ENCODE measurements at regions of chr7 and their contacts with region 1.

Region 1: GRCh38 chr7:148962823-148963582 is 65.3 kb downstream of the PDIA4 start:
- DNase-seq: peak in 8 of 9 donors; percentile 45 to 80 (median 72)
- ATAC-seq: peak; percentile 61
- H3K4me3 ChIP-seq: peak overlapping the region; percentile 72
- H3K4me3 Mint-ChIP-seq: peak overlapping the region; percentile 78 to 98 (median 93)
- H3K27ac ChIP-seq: peak overlapping the region; percentile 66
- H3K27ac Mint-ChIP-seq: peak overlapping the region; percentile 86 to 95 (median 93)
- H3K4me1 ChIP-seq: peaks cover 0 to 7% of the 10 kb centered on the region in 2 donors
- H3K4me1 Mint-ChIP-seq: peaks cover 11 to 33% (median 25%) of the 10 kb centered on the region in 7 donors
- H3K27me3 ChIP-seq: no peaks in the 10 kb centered on the region
- H3K27me3 Mint-ChIP-seq: peaks cover 0 to 3% (median 0%) of the 10 kb centered on the region in 5 donors

Region 2: DNA sequence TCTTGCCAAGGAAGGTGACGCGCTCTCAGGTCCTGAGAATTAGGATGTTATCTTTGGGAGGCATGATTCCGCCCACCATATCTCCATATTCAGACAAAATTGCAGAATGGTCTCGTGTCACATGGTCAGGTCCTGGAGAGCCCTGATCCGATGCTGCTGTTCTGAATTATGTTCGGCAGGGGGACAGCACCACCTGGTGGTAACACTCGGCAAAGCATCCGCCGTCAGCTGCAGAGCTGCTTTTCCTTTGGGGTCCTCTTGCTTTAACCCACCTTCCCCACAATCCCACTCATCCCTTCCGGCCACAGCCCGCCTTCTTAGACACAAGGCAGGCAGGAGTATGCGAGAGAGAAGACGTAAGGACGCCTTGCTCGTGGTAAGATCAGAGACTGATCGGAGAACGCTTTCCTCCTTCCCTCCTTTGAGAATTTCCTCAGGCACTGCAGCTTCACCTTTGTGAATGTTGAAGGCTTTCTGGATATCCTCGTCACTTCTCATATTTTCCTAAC is 700.2 kb before region 1 on chr7:
- CTCF ChIA-PET with region 1: no interaction called
- POLR2A ChIA-PET with region 1: no interaction called
- intact Hi-C with region 1: loop called (anchors 1 kb)
- DNase-seq: peak; percentile 15 to 63 (median 44)
- ATAC-seq: peak; percentile 85
- H3K4me3 ChIP-seq: no peak overlapping the region
- H3K4me3 Mint-ChIP-seq: peak overlapping the region; percentile 13 to 75 (median 60)
- H3K27ac ChIP-seq: no peak overlapping the region
- H3K27ac Mint-ChIP-seq: no peak overlapping the region
- H3K4me1 ChIP-seq: peaks cover 0 to 5% of the 10 kb centered on the region in 2 donors
- H3K4me1 Mint-ChIP-seq: peaks cover 8 to 15% (median 9%) of the 10 kb centered on the region in 7 donors
- H3K27me3 ChIP-seq: no peaks in the 10 kb centered on the region
- H3K27me3 Mint-ChIP-seq: peaks cover 0 to 16% (median 7%) of the 10 kb centered on the region in 5 donors

Region 3: GRCh38 chr7:148575640-148576411 is 387.2 kb before region 1 on chr7:
- CTCF ChIA-PET with region 1: interaction called, 31 read pairs
- POLR2A ChIA-PET with region 1: interaction called, 6 read pairs
- intact Hi-C with region 1: loop called (anchors 1 kb)
- DNase-seq: peak; percentile 38 to 69 (median 56)
- ATAC-seq: peak; percentile 90
- H3K4me3 ChIP-seq: no peak overlapping the region
- H3K4me3 Mint-ChIP-seq: peak overlapping the region in 1 of 10 donors; percentile 43
- H3K27ac ChIP-seq: no peak overlapping the region
- H3K27ac Mint-ChIP-seq: no peak overlapping the region
- H3K4me1 ChIP-seq: peaks cover 0 to 4% of the 10 kb centered on the region in 2 donors
- H3K4me1 Mint-ChIP-seq: peaks cover 0 to 10% (median 4%) of the 10 kb centered on the region in 7 donors
- H3K27me3 ChIP-seq: no peaks in the 10 kb centered on the region
- H3K27me3 Mint-ChIP-seq: peaks cover 0 to 17% (median 0%) of the 10 kb centered on the region in 5 donors

Region 4: GRCh38 chr7:148773334-148773733 is 189.7 kb before region 1 on chr7:
- CTCF ChIA-PET with region 1: interaction called, 5 read pairs
- POLR2A ChIA-PET with region 1: no interaction called
- intact Hi-C with region 1: loop called in 1 of 2 experiments (anchors 10 kb)
- DNase-seq: peak in 8 of 9 donors; percentile 12 to 51 (median 38)
- ATAC-seq: peak; percentile 95
- H3K4me3 ChIP-seq: no peak overlapping the region
- H3K4me3 Mint-ChIP-seq: peak overlapping the region; percentile 34 to 82 (median 67)
- H3K27ac ChIP-seq: peak overlapping the region; percentile 46
- H3K27ac Mint-ChIP-seq: peak overlapping the region; percentile 53 to 93 (median 86)
- H3K4me1 ChIP-seq: peaks cover 18 to 19% of the 10 kb centered on the region in 2 donors
- H3K4me1 Mint-ChIP-seq: peaks cover 27 to 48% (median 36%) of the 10 kb centered on the region in 7 donors
- H3K27me3 ChIP-seq: no peaks in the 10 kb centered on the region
- H3K27me3 Mint-ChIP-seq: no peaks in the 10 kb centered on the region

Region 5: DNA sequence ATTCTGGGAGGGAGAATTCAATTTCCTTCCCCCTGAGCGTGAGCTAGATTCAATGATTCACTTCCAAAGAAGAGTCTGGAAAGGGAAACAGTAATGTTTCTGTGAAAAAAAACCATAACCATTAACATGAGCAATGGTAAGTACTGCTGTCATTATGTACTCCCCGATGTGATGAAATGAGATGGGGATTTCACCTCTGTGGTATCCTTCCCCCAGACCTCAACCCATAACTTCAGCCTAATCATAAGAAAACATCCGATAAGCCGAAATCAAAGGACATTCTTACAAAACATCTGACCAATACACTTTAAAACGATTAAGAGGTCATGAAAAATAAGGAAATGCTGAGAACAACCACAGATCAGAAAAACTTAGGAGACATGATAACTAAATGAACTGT is 106.1 kb before region 1 on chr7:
- CTCF ChIA-PET with region 1: interaction called, 13 read pairs
- POLR2A ChIA-PET with region 1: interaction called, 5 read pairs
- intact Hi-C with region 1: loop called (anchors 1 kb)
- DNase-seq: no peak
- ATAC-seq: peak; percentile 57
- H3K4me3 ChIP-seq: no peak overlapping the region
- H3K4me3 Mint-ChIP-seq: peak overlapping the region in 1 of 10 donors; percentile 60
- H3K27ac ChIP-seq: no peak overlapping the region
- H3K27ac Mint-ChIP-seq: peak overlapping the region in 1 of 9 donors; percentile 63
- H3K4me1 ChIP-seq: peaks cover 3 to 5% of the 10 kb centered on the region in 2 donors
- H3K4me1 Mint-ChIP-seq: peaks cover 8 to 45% (median 15%) of the 10 kb centered on the region in 7 donors
- H3K27me3 ChIP-seq: no peaks in the 10 kb centered on the region
- H3K27me3 Mint-ChIP-seq: no peaks in the 10 kb centered on the region

Region 6: GRCh38 chr7:148987010-148987750 is 24.2 kb after region 1 on chr7:
- CTCF ChIA-PET with region 1: interaction called, 3 read pairs
- POLR2A ChIA-PET with region 1: interaction called, 14 read pairs
- intact Hi-C with region 1: loop called (anchors 1 to 2 kb)
- DNase-seq: peak; percentile 43 to 91 (median 88)
- ATAC-seq: peak; percentile 87
- H3K4me3 ChIP-seq: peak overlapping the region; percentile 97
- H3K4me3 Mint-ChIP-seq: peak overlapping the region; percentile 92 to 99 (median 98)
- H3K27ac ChIP-seq: peak overlapping the region; percentile 85
- H3K27ac Mint-ChIP-seq: peak overlapping the region; percentile 90 to 97 (median 96)
- H3K4me1 ChIP-seq: peaks cover 26% of the 10 kb centered on the region in 2 donors
- H3K4me1 Mint-ChIP-seq: peaks cover 26 to 53% (median 48%) of the 10 kb centered on the region in 7 donors
- H3K27me3 ChIP-seq: no peaks in the 10 kb centered on the region
- H3K27me3 Mint-ChIP-seq: peaks cover 0 to 27% (median 0%) of the 10 kb centered on the region in 5 donors